ENCODE measurements at regions of chr6 and their contacts with region 1.

Region 1: DNA sequence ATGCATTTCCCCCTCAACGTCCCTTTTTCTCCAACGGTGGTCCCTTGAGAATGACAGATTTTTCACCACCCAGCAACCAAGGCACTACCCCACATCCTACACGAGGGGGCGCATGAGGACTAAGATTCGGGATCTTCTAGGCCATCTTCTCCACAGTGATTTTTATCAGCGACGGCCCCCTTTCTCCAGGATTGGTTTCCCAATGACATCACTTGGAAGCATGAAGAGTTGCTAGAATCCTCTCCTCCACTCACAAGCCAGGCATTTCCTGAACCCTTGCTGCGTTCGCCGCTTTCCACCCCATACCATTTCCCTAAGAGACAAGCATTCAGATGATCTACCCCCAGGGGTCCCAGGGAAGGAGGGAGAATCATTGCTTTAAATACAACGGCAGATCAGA is 252.0 kb downstream of the HIVEP2 start:
- DNase-seq: peak in 8 of 10 donors; percentile 58 to 91 (median 72)

Region 2: DNA sequence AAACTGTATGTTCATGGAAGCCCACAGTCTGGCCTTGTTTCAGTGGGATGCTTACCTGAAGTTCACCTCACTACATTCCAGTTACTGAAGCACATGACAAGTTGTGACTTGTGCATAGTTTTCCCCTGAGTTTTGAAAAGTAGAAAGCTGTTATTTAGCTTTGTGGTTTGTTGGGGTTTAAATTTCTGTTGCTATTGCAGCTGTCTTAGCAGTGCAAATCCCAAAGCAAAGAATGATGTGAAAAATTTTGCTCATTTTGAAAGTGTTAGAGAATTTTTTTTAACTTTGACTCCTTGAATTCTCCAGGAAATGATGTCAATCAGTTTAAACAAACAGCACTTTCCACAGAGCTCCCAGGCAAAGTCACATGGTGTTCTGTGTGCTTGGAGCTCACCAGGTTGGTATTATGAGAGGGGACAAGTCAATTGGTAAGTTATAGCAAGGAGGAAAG is 122.7 kb before region 1 on chr6:
- intact Hi-C with region 1: no loop called
- DNase-seq: no peak

Region 3: DNA sequence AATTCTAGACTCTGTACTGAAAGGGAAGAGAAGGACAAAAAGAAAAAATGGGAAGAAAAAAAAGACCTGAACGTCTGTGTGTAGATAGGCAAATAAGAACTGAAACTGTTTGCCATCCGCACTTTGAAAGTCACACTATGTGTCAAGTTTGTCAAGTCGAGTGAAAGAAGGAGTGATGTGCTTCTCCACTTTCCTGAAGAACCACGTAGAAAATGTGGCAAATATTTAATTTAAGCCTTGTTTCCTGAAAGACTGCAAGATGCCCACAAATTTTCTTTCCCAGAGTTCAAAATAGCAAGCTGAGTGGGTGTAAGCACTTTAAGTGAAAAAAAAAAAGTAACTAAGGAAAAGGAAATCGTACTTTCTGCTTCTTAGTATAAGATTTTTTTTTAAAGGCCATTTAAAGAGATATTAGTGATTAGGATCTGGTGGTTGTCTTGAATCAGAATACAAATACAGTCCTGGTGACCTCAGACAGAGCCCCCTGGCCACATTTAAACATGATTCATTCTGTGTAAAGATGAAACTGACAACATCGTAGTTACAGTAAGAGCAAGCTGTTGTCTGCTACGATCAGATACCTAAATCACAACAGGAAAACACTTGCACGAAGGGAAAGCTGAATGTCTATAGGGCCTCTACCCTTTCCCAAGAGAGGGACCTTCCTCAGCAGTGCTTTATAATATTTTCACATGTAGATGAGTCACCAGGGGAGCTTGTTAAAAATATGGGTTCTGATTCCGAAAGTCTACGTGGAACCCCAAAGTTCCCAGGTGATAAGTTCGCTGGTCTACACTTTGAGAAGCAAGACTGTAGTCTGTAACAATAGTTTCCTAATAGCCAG is 149.7 kb after region 1 on chr6:
- intact Hi-C with region 1: no loop called
- DNase-seq: no peak

Region 4: DNA sequence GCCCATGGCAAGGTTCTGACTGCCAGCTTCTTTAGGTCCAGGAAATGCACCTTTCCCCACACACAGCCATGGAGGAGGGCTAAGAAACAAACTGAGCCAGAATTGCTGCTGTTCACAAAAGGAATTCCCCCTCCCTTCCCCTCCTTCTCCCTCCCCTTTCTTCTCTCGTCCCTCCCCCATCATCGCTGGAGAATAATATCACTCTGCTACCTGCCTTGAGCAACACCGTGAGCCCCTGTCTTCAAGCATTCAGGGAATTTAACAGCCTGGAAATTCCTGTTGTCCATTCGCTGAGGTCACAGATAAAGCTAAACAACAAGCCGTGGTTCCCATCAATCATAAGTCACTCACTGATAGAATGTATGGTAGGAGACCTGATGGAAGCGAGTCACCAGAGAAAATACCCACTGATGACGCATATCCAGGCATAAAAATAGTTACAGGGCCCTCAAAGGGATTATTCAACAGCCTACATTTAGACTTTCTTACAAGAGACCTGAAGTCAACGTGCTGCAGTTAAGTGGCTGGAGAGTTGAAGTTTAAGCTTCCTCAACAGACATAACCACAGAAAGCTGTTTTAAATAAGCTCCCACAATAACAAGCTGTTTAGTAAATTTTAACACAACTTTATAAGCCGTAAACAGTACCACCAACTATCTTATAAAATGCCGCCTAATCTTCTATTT is 192.4 kb after region 1 on chr6:
- intact Hi-C with region 1: loop called (anchors 10 kb)
- DNase-seq: no peak

Region 5: GRCh38 chr6:143026696-143027449 is 333.9 kb after region 1 on chr6:
- intact Hi-C with region 1: loop called (anchors 5 kb)
- DNase-seq: peak in 6 of 10 donors; percentile 16 to 82 (median 50)

Measured in posterior cingulate gyrus (tissue), 11 donors.